Activated B cell treated with CpG ODN at 0.5 μM for 24 hours (primary cell): ENCODE measurements at regions of chr9 and their contacts with region 1.

Region 1: GRCh38 chr9:123544007-123544827 is 188.2 kb downstream of the CRB2 start:
- DNase-seq: no peak
- ATAC-seq: no peak
- H3K4me3 Mint-ChIP-seq: no peak overlapping the region
- H3K27ac Mint-ChIP-seq: no peak overlapping the region
- H3K4me1 Mint-ChIP-seq: no peaks in the 10 kb centered on the region
- H3K27me3 Mint-ChIP-seq: no peaks in the 10 kb centered on the region
- CTCF ChIP-seq: peak; percentile 70

Region 2: DNA sequence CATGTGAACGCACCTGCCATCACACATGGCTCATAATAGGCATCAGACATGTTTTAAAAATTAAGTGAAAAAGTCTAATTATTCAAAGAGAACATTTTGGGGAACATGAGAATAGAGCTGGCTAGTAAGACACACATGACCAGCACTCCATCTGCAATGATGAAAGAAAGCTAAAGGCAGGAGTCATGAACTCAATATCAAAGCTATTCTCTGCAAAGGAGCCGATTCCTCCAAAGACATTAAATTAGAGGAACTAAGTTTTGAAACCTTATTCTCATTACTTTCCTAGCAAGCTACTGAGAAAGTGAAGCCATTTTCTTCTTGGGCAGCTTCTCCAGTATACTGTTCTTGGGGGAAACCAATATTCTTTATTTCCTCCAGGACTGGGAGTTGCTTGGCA is 16.2 kb before region 1 on chr9:
- CTCF ChIA-PET with region 1: no interaction called
- POLR2A ChIA-PET with region 1: no interaction called
- intact Hi-C with region 1: no loop called
- DNase-seq: no peak
- ATAC-seq: no peak
- H3K4me3 Mint-ChIP-seq: no peak overlapping the region
- H3K27ac Mint-ChIP-seq: no peak overlapping the region
- H3K4me1 Mint-ChIP-seq: no peaks in the 10 kb centered on the region
- H3K27me3 Mint-ChIP-seq: no peaks in the 10 kb centered on the region
- CTCF ChIP-seq: no peak

Region 3: DNA sequence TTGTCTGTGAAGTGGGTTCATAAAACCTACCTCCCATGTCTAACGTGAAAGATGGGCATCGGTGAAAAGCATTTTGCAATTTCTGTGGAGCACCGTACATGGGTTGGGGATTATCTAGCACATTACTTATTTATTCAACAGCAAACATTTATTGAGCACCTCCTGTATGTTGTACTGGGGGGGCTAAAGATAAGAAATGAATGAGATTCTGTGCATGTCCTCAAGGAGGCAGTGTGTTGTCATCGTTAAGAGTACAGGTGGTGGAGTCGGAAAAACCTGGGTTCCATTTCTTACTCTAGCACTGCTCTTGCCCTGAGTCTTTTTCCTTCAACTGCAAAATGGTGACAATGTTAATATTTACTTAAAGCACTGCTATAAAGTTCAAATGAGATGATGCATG is 416.1 kb after region 1 on chr9:
- CTCF ChIA-PET with region 1: no interaction called
- POLR2A ChIA-PET with region 1: no interaction called
- intact Hi-C with region 1: loop called (anchors 10 kb)
- DNase-seq: no peak
- ATAC-seq: no peak
- H3K4me3 Mint-ChIP-seq: no peak overlapping the region
- H3K27ac Mint-ChIP-seq: no peak overlapping the region
- H3K4me1 Mint-ChIP-seq: peaks cover 11% of the 10 kb centered on the region
- H3K27me3 Mint-ChIP-seq: peaks cover 31% of the 10 kb centered on the region
- CTCF ChIP-seq: no peak

Region 4: DNA sequence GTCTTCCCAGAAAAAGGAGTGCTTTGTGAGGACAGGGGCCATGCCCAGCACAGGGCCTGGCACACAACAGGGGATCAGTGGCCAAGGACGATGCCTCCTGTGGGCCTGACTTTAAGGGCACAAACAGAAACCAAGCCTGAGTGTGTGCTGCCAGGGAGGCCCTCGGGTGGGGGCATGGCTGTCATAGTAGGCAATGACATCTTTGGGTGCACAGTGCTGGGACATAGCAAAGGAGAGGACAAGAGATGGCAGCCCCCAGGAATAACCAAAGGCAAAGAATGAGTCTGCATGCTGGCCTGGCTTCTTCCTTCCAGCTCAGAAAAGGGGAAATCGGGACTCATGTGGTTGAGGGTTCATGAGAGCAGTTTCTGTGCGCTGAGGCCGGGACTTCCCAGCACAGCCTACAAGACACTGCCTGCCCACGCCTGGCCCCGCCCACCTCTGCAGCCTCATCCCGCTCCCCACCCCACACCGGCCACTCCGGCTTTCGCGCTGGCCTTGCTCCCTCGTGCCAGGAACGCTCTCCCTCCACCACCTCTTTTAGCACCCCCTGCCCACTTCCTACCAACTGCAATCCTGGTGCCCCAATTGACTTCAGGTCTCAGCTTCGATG is 453.6 kb after region 1 on chr9:
- CTCF ChIA-PET with region 1: interaction called, 6 read pairs
- POLR2A ChIA-PET with region 1: no interaction called
- intact Hi-C with region 1: loop called (anchors 5 kb)
- DNase-seq: peak; percentile 40
- ATAC-seq: peak; percentile 72
- H3K4me3 Mint-ChIP-seq: peak overlapping the region; percentile 89
- H3K27ac Mint-ChIP-seq: peak overlapping the region; percentile 72
- H3K4me1 Mint-ChIP-seq: peaks cover 40% of the 10 kb centered on the region
- H3K27me3 Mint-ChIP-seq: peaks cover 56% of the 10 kb centered on the region
- CTCF ChIP-seq: no peak

Region 5: DNA sequence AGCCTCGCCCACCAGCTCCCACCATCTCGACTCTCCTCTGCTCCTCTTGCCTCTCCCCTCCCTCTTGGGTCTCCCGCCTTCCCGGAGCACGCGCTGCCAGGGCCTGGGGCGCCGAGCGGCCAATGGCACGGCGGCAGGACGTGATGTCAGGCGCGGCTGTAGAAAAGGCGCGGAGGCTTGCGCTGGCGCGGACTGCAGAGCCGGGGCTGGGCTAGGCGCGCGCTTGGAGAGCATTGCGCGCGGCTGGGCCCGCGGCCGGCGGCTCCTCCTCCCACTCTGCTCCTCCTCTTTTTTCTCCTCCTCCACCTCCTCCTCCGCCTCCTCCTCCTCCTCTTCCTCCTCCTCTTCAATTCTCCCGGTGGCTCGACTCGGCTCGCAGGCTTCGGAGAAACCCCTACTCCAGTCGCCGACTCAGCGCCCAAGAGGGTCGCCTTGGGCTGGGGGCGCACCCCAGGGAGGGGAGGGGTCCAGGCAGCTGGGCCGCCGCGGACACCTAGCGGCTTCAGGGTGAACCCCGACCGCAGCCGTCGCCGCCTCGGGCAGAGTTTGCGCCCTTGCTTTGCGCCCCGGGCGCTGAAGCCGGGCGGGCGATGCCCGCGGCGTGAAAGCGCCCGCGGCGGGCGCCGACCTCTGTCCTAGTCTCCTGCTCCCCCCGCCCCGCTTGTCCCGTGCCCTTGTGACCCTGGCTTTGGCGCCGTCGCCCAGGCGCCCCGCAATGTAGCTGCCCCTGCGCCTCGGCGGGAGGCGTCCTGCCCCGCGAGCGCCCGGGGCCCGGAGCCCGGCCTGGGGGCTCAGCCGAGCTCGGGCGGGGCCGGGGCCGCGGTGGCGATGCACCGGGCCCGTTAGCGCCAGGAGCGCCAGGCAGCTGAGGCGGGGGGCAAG is 467.4 kb after region 1 on chr9 and contains the start of gene LHX2:
- CTCF ChIA-PET with region 1: no interaction called
- POLR2A ChIA-PET with region 1: no interaction called
- intact Hi-C with region 1: loop called (anchors 1 kb)
- DNase-seq: no peak
- ATAC-seq: peak; percentile 33
- H3K4me3 Mint-ChIP-seq: peak within 1 kb of the TSS; percentile 67
- H3K27ac Mint-ChIP-seq: peak within 1 kb of the TSS; percentile 62
- H3K4me1 Mint-ChIP-seq: peaks cover 52% of the 10 kb centered on the region
- H3K27me3 Mint-ChIP-seq: peaks cover 60% of the 10 kb centered on the region
- CTCF ChIP-seq: no peak
- total RNA-seq, gene LHX2: not detected in 2 replicates

Region 6: GRCh38 chr9:124040935-124041816 is 497.0 kb after region 1 on chr9:
- CTCF ChIA-PET with region 1: interaction called, 57 read pairs
- POLR2A ChIA-PET with region 1: interaction called, 3 read pairs
- intact Hi-C with region 1: loop called (anchors 1 kb)
- DNase-seq: peak; percentile 66
- ATAC-seq: peak; percentile 64
- H3K4me3 Mint-ChIP-seq: peak overlapping the region; percentile 75
- H3K27ac Mint-ChIP-seq: no peak overlapping the region
- H3K4me1 Mint-ChIP-seq: peaks cover 24% of the 10 kb centered on the region
- H3K27me3 Mint-ChIP-seq: peaks cover 43% of the 10 kb centered on the region
- CTCF ChIP-seq: peak; percentile 68

Region 7: DNA sequence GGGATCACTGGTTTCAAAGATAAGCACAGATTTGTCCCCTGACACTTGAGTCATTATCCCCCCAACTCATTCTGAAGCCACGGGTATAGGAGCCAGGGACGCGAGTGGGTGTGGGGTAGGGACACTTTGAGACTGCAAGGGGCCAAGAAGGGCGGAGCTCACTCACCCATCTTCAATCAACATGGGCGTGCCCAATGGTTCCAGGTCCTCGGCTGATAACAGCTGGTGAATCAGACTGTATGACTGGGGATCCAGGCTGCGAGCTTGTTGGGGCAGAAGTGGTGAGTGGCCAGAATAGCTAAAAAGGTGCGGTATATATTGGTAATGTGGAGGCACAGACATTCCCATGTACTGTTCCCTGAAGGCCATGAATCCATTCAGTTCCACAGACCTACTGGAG is 993.7 kb after region 1 on chr9:
- CTCF ChIA-PET with region 1: interaction called, 9 read pairs
- POLR2A ChIA-PET with region 1: no interaction called
- intact Hi-C with region 1: loop called (anchors 1 kb)
- DNase-seq: no peak
- ATAC-seq: no peak
- H3K4me3 Mint-ChIP-seq: no peak overlapping the region
- H3K27ac Mint-ChIP-seq: no peak overlapping the region
- H3K4me1 Mint-ChIP-seq: no peaks in the 10 kb centered on the region
- H3K27me3 Mint-ChIP-seq: no peaks in the 10 kb centered on the region
- CTCF ChIP-seq: no peak